Activated CD4-positive, alpha-beta T cell treated with anti-CD3 and anti-CD28 coated beads for 36 hours (primary cell): ENCODE measurements at regions of chr12 and their contacts with region 1.

Region 1: GRCh38 chr12:84874125-84874824 is 38.3 kb downstream of the SLC6A15 start:
- DNase-seq: no peak
- ATAC-seq: peak; percentile 53
- H3K4me3 Mint-ChIP-seq: no peak overlapping the region
- H3K27ac Mint-ChIP-seq: no peak overlapping the region
- H3K4me1 Mint-ChIP-seq: no peaks in the 10 kb centered on the region
- H3K27me3 Mint-ChIP-seq: peaks cover 5% of the 10 kb centered on the region

Region 2: GRCh38 chr12:85029456-85029855 is 155.2 kb after region 1 on chr12:
- CTCF ChIA-PET with region 1: interaction called, 75 read pairs
- POLR2A ChIA-PET with region 1: no interaction called
- intact Hi-C with region 1: loop called (anchors 1 kb)
- DNase-seq: no peak
- ATAC-seq: no peak
- H3K4me3 Mint-ChIP-seq: no peak overlapping the region
- H3K27ac Mint-ChIP-seq: no peak overlapping the region
- H3K4me1 Mint-ChIP-seq: no peaks in the 10 kb centered on the region
- H3K27me3 Mint-ChIP-seq: peaks cover 8% of the 10 kb centered on the region

Region 3: GRCh38 chr12:85057370-85057963 is 183.2 kb after region 1 on chr12:
- CTCF ChIA-PET with region 1: interaction called, 19 read pairs
- POLR2A ChIA-PET with region 1: no interaction called
- intact Hi-C with region 1: loop called (anchors 1 kb)
- DNase-seq: peak; percentile 40
- ATAC-seq: no peak
- H3K4me3 Mint-ChIP-seq: no peak overlapping the region
- H3K27ac Mint-ChIP-seq: no peak overlapping the region
- H3K4me1 Mint-ChIP-seq: no peaks in the 10 kb centered on the region
- H3K27me3 Mint-ChIP-seq: no peaks in the 10 kb centered on the region

Region 4: DNA sequence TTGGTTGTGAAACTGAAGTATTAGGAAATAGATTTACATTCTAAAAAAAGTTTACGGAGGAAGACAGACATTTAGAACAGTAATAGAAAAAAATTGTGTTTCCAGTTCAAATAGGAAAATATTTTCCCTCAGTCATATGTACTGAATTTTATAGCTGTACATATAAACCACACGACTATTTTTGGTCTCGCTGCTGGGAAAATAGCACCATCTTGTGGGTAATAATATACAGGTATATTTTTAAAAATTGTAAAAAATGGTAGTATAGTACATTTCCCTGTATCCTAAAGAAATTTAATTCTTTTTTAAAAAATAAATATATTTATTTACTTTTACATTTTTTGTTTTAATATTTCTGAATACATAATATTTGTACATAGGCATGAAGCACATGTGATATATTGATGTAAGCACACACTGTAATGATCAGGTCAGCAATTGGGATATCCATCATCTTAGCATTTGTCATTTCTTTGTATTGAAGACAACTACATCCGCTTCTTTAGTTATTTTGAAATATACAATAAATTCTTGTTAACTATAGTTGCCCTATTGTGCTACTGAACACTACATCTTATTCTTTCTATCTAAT is 574.4 kb after region 1 on chr12:
- CTCF ChIA-PET with region 1: no interaction called
- POLR2A ChIA-PET with region 1: no interaction called
- intact Hi-C with region 1: loop called (anchors 2 to 10 kb)
- DNase-seq: no peak
- ATAC-seq: no peak
- H3K4me3 Mint-ChIP-seq: no peak overlapping the region
- H3K27ac Mint-ChIP-seq: no peak overlapping the region
- H3K4me1 Mint-ChIP-seq: no peaks in the 10 kb centered on the region
- H3K27me3 Mint-ChIP-seq: no peaks in the 10 kb centered on the region

Region 5: DNA sequence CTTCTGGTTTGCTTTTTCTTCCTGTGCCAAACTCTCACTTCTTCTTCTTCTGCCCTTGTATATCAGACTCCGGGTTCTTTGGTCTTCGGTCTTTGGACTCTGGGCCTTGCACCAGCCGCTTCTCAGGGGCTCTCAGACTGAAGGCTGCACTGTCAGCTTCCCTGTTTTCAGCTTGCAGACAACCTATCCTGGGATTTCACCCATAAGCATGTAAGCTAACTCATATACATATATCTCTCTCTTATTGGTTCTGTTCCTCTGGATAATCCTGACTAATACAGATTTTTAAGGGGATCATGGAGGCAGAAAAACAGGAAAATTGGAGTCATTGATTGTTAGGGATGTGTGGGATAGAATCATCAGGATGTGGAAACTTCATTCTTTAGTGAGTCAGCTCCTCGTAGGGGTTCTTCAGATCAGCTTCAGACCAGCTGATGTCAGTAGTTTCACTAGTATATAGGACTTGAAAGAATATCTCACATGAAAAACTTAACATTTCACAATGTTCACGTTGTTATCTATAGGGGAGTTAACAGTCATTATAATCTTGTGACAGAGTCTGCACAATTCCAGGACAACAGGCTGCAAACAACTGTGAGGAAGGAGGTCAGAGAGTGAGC is 859.1 kb after region 1 on chr12:
- CTCF ChIA-PET with region 1: no interaction called
- POLR2A ChIA-PET with region 1: no interaction called
- intact Hi-C with region 1: no loop called
- DNase-seq: no peak
- ATAC-seq: no peak
- H3K4me3 Mint-ChIP-seq: no peak overlapping the region
- H3K27ac Mint-ChIP-seq: no peak overlapping the region
- H3K4me1 Mint-ChIP-seq: no peaks in the 10 kb centered on the region
- H3K27me3 Mint-ChIP-seq: no peaks in the 10 kb centered on the region